Activated CD4-positive, alpha-beta memory T cell treated with anti-CD3 and anti-CD28 coated beads, Interleukin-2, amount 10 ng/mL, durations not matched to agents 7 days and 5 days (primary cell): ENCODE measurements at regions of chr3 and their contacts with region 1.

Region 1: DNA sequence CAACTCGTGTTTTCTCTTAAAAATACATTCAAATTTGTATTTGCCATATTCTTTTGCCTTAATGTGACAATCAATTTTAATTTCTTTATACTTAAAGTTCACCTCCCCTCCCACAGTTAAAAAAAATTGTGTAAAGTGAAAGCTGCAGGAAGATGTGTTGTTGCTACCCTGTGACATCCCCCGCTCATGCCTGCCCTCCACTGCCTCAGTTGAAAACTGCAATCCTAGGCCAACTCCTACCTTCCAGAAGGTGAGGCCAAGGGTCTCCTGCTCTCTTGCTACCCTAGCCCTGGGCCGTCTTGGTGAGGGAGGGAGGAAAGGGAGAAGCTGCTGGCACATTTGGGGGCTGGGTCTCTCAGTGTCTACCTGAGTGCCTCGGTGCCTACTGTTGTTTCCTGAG is 57.0 kb upstream of the CMTM7 start:
- DNase-seq: peak; percentile 65
- H3K4me3 Mint-ChIP-seq: no peak overlapping the region
- H3K27ac Mint-ChIP-seq: no peak overlapping the region
- H3K4me1 Mint-ChIP-seq: peaks cover 30% of the 10 kb centered on the region
- H3K27me3 Mint-ChIP-seq: no peaks in the 10 kb centered on the region

Region 2: GRCh38 chr3:32177702-32178198 is 156.9 kb before region 1 on chr3:
- CTCF ChIA-PET with region 1: interaction called, 38 read pairs
- POLR2A ChIA-PET with region 1: no interaction called
- DNase-seq: peak; percentile 53
- H3K4me3 Mint-ChIP-seq: no peak overlapping the region
- H3K27ac Mint-ChIP-seq: no peak overlapping the region
- H3K4me1 Mint-ChIP-seq: peaks cover 13% of the 10 kb centered on the region
- H3K27me3 Mint-ChIP-seq: peaks cover 7% of the 10 kb centered on the region

Region 3: GRCh38 chr3:32276279-32276847 is 58.3 kb before region 1 on chr3:
- CTCF ChIA-PET with region 1: no interaction called
- POLR2A ChIA-PET with region 1: no interaction called
- DNase-seq: no peak
- H3K4me3 Mint-ChIP-seq: no peak overlapping the region
- H3K27ac Mint-ChIP-seq: no peak overlapping the region
- H3K4me1 Mint-ChIP-seq: no peaks in the 10 kb centered on the region
- H3K27me3 Mint-ChIP-seq: no peaks in the 10 kb centered on the region

Region 4: DNA sequence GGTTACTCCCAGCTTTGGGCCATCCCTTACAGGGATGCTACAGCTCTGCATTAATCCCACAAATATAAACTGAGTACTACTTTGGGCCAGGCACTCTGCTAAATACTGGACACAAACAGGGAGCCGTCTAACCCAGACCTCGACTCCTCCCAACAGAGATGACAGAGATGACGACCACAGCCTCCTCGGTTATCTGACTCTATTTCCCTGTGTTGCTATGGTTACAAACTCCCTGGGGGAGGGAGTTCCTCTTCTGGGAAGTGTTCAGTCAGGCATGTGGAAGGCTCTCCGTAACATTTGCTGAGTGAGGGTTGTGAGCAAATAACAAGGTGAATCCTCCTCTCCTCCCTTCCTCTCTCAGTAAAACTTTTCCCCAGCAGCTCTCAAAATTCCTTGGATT is 50.3 kb after region 1 on chr3:
- CTCF ChIA-PET with region 1: no interaction called
- POLR2A ChIA-PET with region 1: no interaction called
- DNase-seq: no peak
- H3K4me3 Mint-ChIP-seq: no peak overlapping the region
- H3K27ac Mint-ChIP-seq: no peak overlapping the region
- H3K4me1 Mint-ChIP-seq: peaks cover 6% of the 10 kb centered on the region
- H3K27me3 Mint-ChIP-seq: peaks cover 10% of the 10 kb centered on the region